ENCODE measurements at regions of chr4 and their contacts with region 1.

Region 1: GRCh38 chr4:155376387-155377268 is at the start of gene MAP9:
- DNase-seq: peak; percentile 62 to 95 (median 88)
- ATAC-seq: peak; percentile 91 to 95 (median 92)
- H3K4me3 ChIP-seq: peak within 1 kb of the TSS; percentile 67 to 94
- H3K4me3 Mint-ChIP-seq: peak within 1 kb of the TSS; percentile 86 to 90 (median 90)
- H3K27ac ChIP-seq: peak within 1 kb of the TSS; percentile 89
- H3K27ac Mint-ChIP-seq: peak within 1 kb of the TSS; percentile 87 to 89
- H3K4me1 ChIP-seq: peaks cover 0 to 6% of the 10 kb centered on the region in 2 experiments
- H3K4me1 Mint-ChIP-seq: peaks cover 6 to 21% (median 18%) of the 10 kb centered on the region in 3 donors
- H3K27me3 ChIP-seq: peaks cover 0 to 3% of the 10 kb centered on the region in 2 experiments
- H3K27me3 Mint-ChIP-seq: no peaks in the 10 kb centered on the region
- total RNA-seq, gene MAP9: 5.1 to 17.3 (median 6.6) TPM

Region 2: DNA sequence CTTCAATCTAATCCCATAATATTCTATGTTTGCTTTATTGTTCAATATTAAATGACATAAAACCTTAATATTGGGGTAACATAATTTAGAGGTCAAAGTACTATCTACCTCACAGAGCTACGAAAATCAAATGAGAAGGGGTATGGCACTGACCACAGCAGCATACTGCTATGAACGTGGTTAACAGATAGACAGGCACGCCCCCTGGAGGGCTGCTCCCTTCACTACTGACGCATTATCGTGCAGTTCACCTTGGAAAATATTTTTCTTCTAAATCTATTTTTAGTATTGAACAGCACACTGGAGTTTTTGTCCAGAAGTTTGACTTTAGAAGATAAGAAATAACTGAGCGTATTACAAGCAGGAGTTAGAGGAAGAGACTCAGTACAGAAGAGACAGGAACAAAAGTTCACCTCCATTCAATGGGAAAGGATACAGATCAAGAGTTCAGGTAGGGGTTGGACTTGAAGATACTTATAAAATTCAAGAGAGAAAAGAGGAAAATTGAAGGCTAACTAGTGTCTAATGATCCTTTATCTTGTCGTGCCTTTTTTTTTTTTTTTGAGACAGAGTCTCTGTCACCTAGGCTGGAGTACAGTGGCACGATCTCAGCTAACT is 22.6 kb before region 1 on chr4:
- CTCF ChIA-PET with region 1: interaction called in 1 of 2 experiments, 5 read pairs
- POLR2A ChIA-PET with region 1: interaction called in 1 of 2 experiments, 11 read pairs
- DNase-seq: peak in 18 of 35 experiments; percentile 3 to 39 (median 11)
- ATAC-seq: no peak
- H3K4me3 ChIP-seq: no peak overlapping the region
- H3K4me3 Mint-ChIP-seq: no peak overlapping the region
- H3K27ac ChIP-seq: no peak overlapping the region
- H3K27ac Mint-ChIP-seq: peak overlapping the region in 1 of 2 donors; percentile 40
- H3K4me1 ChIP-seq: no peaks in the 10 kb centered on the region
- H3K4me1 Mint-ChIP-seq: no peaks in the 10 kb centered on the region
- H3K27me3 ChIP-seq: no peaks in the 10 kb centered on the region
- H3K27me3 Mint-ChIP-seq: no peaks in the 10 kb centered on the region

Region 3: DNA sequence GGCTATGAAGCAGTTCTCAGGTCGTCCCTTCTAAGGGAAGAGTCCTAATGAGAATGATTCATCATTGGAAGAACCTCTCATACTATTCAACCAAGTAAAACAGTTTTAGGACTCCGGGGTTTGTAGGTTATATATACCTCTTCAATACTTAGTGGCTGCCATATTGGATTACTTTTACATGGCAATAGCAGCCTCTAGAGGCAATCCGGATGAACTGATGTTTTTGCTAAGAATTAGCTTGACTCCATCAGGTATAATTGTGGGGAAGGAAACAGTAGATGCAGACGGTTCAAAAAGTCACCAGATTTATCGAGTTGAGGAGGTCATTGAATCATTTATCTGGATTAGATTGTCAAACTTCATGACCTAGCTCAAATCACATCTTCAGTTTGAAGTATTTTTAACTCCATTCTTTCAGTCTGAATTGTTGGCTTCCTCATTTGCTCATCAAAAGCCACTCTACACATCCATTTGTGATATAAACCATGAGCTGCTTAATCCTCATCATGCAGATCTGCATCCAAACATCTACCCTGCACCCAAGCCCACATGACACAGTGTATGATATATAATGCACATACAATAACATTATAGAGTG is 410.6 kb after region 1 on chr4:
- CTCF ChIA-PET with region 1: no interaction called
- POLR2A ChIA-PET with region 1: no interaction called
- DNase-seq: peak in 1 of 35 experiments; percentile 46
- ATAC-seq: peak in 2 of 4 experiments; percentile 54 to 74
- H3K4me3 ChIP-seq: no peak overlapping the region
- H3K4me3 Mint-ChIP-seq: no peak overlapping the region
- H3K27ac ChIP-seq: no peak overlapping the region
- H3K27ac Mint-ChIP-seq: no peak overlapping the region
- H3K4me1 ChIP-seq: no peaks in the 10 kb centered on the region
- H3K4me1 Mint-ChIP-seq: peaks cover 0 to 7% (median 2%) of the 10 kb centered on the region in 3 donors
- H3K27me3 ChIP-seq: no peaks in the 10 kb centered on the region
- H3K27me3 Mint-ChIP-seq: peaks cover 0 to 13% of the 10 kb centered on the region in 2 donors